Mammary epithelial cell (primary cell): ENCODE measurements at regions of chr11 and their contacts with region 1.

Region 1: GRCh38 chr11:1772270-1773130 is 8.8 kb upstream of the CTSD start:
- DNase-seq: peak; percentile 85
- H3K4me3 ChIP-seq: no peak overlapping the region
- H3K27ac ChIP-seq: peak overlapping the region; percentile 56
- H3K4me1 ChIP-seq: peaks cover 30% of the 10 kb centered on the region
- H3K27me3 ChIP-seq: no peaks in the 10 kb centered on the region
- CTCF ChIP-seq: no peak

Region 2: GRCh38 chr11:1650034-1650917 is 122.2 kb before region 1 on chr11:
- CTCF ChIA-PET with region 1: no interaction called
- dilution Hi-C with region 1: no loop called
- in situ Hi-C with region 1: no loop called
- intact Hi-C with region 1: no loop called
- DNase-seq: peak; percentile 47
- H3K4me3 ChIP-seq: no peak overlapping the region
- H3K27ac ChIP-seq: no peak overlapping the region
- H3K4me1 ChIP-seq: peaks cover 15% of the 10 kb centered on the region
- H3K27me3 ChIP-seq: no peaks in the 10 kb centered on the region
- CTCF ChIP-seq: peak in 1 of 2 donors; percentile 0

Region 3: DNA sequence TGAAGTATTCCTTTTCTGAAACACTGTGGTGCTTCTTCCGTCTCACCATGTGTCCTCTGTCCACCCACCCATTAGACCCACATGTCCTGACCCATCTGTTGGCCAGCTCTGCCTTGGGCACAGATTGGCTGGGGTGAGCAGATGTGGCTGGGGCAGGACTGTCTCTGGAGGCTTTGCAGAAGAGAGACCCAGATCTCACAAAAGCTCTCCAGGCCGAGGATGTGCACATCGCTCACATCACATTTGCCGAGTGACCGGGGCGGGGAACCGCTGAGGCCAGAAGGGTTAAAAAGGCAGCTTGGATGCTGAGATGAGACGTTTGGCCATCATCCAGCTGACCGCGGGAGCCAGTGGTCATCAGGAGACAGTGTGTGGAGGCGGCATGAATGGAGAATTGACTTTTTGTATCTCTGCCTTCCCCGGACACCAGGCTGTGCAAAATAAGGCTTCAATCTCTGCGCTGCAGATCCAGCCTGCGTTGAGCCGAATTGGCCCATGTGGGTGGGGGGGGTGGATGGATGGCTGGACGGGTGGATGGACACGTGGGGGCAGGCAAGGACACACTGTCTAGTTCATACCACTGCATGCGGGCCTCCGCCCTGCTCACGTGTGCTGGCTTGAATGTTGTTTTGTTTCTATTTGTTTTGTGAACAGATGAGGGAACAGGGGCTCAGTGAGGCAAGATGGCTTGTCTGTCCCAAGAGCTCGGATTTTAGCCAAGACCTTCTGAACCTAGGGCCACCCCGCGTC is 28.2 kb before region 1 on chr11:
- CTCF ChIA-PET with region 1: no interaction called
- dilution Hi-C with region 1: loop called (anchors 5 kb)
- in situ Hi-C with region 1: no loop called
- intact Hi-C with region 1: no loop called
- DNase-seq: no peak
- H3K4me3 ChIP-seq: no peak overlapping the region
- H3K27ac ChIP-seq: no peak overlapping the region
- H3K4me1 ChIP-seq: peaks cover 31% of the 10 kb centered on the region
- H3K27me3 ChIP-seq: no peaks in the 10 kb centered on the region
- CTCF ChIP-seq: peak in 1 of 2 donors; percentile 6

Region 4: GRCh38 chr11:1817511-1817910 is 45.0 kb after region 1 on chr11:
- CTCF ChIA-PET with region 1: no interaction called
- dilution Hi-C with region 1: loop called (anchors 5 kb)
- in situ Hi-C with region 1: no loop called
- intact Hi-C with region 1: no loop called
- DNase-seq: peak; percentile 50
- H3K4me3 ChIP-seq: no peak overlapping the region
- H3K27ac ChIP-seq: peak overlapping the region; percentile 26
- H3K4me1 ChIP-seq: peaks cover 29% of the 10 kb centered on the region
- H3K27me3 ChIP-seq: no peaks in the 10 kb centered on the region
- CTCF ChIP-seq: no peak